CD8-positive, alpha-beta T cell (primary cell): ENCODE measurements at regions of chr15 and their contacts with region 1.

Region 1: GRCh38 chr15:91706322-91707032 is 147.0 kb upstream of the SLCO3A1 start:
- DNase-seq: peak; percentile 58 to 91 (median 80)
- ATAC-seq: peak; percentile 98
- H3K4me3 ChIP-seq: no peak overlapping the region
- H3K4me3 Mint-ChIP-seq: peak overlapping the region; percentile 49
- H3K27ac ChIP-seq: peak overlapping the region in 1 of 2 experiments; percentile 51
- H3K27ac Mint-ChIP-seq: peak overlapping the region; percentile 56
- H3K4me1 ChIP-seq: peaks cover 13% of the 10 kb centered on the region
- H3K4me1 Mint-ChIP-seq: peaks cover 15% of the 10 kb centered on the region
- H3K27me3 ChIP-seq: no peaks in the 10 kb centered on the region
- H3K27me3 Mint-ChIP-seq: no peaks in the 10 kb centered on the region
- CTCF ChIP-seq: peak; percentile 70

Region 2: GRCh38 chr15:91302588-91303439 is 403.7 kb before region 1 on chr15:
- CTCF ChIA-PET with region 1: interaction called, 18 read pairs
- POLR2A ChIA-PET with region 1: no interaction called
- intact Hi-C with region 1: loop called (anchors 1 to 10 kb)
- DNase-seq: peak in 4 of 9 experiments; percentile 33 to 74 (median 60)
- ATAC-seq: peak; percentile 48
- H3K4me3 ChIP-seq: no peak overlapping the region
- H3K4me3 Mint-ChIP-seq: no peak overlapping the region
- H3K27ac ChIP-seq: no peak overlapping the region
- H3K27ac Mint-ChIP-seq: no peak overlapping the region
- H3K4me1 ChIP-seq: peaks cover 26% of the 10 kb centered on the region
- H3K4me1 Mint-ChIP-seq: peaks cover 27% of the 10 kb centered on the region
- H3K27me3 ChIP-seq: peaks cover 0 to 2% of the 10 kb centered on the region in 2 experiments
- H3K27me3 Mint-ChIP-seq: peaks cover 11% of the 10 kb centered on the region
- CTCF ChIP-seq: peak; percentile 87

Region 3: GRCh38 chr15:91717811-91718210 is 11.3 kb after region 1 on chr15:
- CTCF ChIA-PET with region 1: interaction called, 11 read pairs
- POLR2A ChIA-PET with region 1: no interaction called
- intact Hi-C with region 1: no loop called
- DNase-seq: no peak
- ATAC-seq: no peak
- H3K4me3 ChIP-seq: no peak overlapping the region
- H3K4me3 Mint-ChIP-seq: no peak overlapping the region
- H3K27ac ChIP-seq: no peak overlapping the region
- H3K27ac Mint-ChIP-seq: no peak overlapping the region
- H3K4me1 ChIP-seq: no peaks in the 10 kb centered on the region
- H3K4me1 Mint-ChIP-seq: no peaks in the 10 kb centered on the region
- H3K27me3 ChIP-seq: no peaks in the 10 kb centered on the region
- H3K27me3 Mint-ChIP-seq: peaks cover 16% of the 10 kb centered on the region
- CTCF ChIP-seq: no peak

Region 4: DNA sequence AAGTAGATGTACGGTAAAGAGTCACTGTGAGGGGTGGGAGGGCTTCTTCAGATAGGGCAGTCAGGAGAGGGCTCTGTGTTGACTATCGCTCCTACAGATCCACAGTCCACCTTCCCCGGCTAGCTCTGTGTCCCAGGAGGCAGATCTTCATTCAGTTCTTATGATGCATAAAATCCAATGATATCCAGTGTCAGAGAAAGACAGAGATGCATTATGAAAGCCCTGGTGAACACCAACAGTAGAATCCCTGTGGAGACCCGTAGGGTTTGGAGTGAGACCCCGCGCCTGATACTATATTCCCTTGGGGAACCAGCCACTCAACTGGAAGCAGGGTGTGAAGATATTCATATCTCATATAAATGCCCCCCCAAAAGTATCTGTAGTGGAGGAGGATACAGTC is 27.2 kb after region 1 on chr15:
- CTCF ChIA-PET with region 1: interaction called, 10 read pairs
- POLR2A ChIA-PET with region 1: interaction called, 3 read pairs
- intact Hi-C with region 1: no loop called
- DNase-seq: no peak
- ATAC-seq: no peak
- H3K4me3 ChIP-seq: no peak overlapping the region
- H3K4me3 Mint-ChIP-seq: no peak overlapping the region
- H3K27ac ChIP-seq: no peak overlapping the region
- H3K27ac Mint-ChIP-seq: no peak overlapping the region
- H3K4me1 ChIP-seq: no peaks in the 10 kb centered on the region
- H3K4me1 Mint-ChIP-seq: no peaks in the 10 kb centered on the region
- H3K27me3 ChIP-seq: peaks cover 0 to 3% of the 10 kb centered on the region in 2 experiments
- H3K27me3 Mint-ChIP-seq: peaks cover 48% of the 10 kb centered on the region
- CTCF ChIP-seq: no peak

Region 5: GRCh38 chr15:91942676-91943576 is 236.4 kb after region 1 on chr15:
- CTCF ChIA-PET with region 1: interaction called, 36 read pairs
- POLR2A ChIA-PET with region 1: interaction called, 4 read pairs
- intact Hi-C with region 1: loop called (anchors 2 to 5 kb)
- DNase-seq: peak in 6 of 9 experiments; percentile 11 to 72 (median 37)
- ATAC-seq: peak; percentile 71
- H3K4me3 ChIP-seq: no peak overlapping the region
- H3K4me3 Mint-ChIP-seq: peak overlapping the region; percentile 1
- H3K27ac ChIP-seq: no peak overlapping the region
- H3K27ac Mint-ChIP-seq: peak overlapping the region; percentile 43
- H3K4me1 ChIP-seq: no peaks in the 10 kb centered on the region
- H3K4me1 Mint-ChIP-seq: peaks cover 32% of the 10 kb centered on the region
- H3K27me3 ChIP-seq: no peaks in the 10 kb centered on the region
- H3K27me3 Mint-ChIP-seq: no peaks in the 10 kb centered on the region
- CTCF ChIP-seq: no peak

Region 6: DNA sequence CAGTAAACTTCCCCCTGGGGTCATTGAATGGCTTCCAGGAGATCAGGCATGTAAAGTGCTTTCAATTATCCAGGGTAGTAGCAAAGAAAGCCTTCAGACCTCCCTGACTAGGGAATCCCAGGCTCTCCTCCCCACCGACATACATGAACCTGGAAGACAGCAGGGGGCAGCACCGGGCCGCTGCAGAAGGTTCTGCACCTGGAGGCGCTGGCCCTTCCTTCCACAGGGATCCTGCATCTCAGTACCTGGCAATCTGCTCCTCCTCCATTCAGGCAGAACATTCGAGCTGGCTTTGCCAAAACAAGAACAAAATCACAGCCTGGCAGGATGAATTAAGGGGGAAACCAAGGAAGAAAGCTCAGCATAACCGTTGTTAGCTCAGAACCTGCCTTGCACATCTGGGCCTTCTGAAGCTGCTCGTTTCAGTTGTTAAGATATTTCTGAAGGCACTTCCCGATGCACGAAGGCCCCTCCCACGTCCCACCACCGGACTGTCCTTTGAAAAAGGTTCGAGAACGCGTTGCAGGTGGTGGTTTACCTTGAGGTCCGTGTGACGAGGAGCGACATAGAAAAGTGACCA is 384.8 kb after region 1 on chr15:
- CTCF ChIA-PET with region 1: interaction called, 12 read pairs
- POLR2A ChIA-PET with region 1: no interaction called
- intact Hi-C with region 1: no loop called
- DNase-seq: peak in 1 of 9 experiments; percentile 22
- ATAC-seq: no peak
- H3K4me3 ChIP-seq: no peak overlapping the region
- H3K4me3 Mint-ChIP-seq: no peak overlapping the region
- H3K27ac ChIP-seq: no peak overlapping the region
- H3K27ac Mint-ChIP-seq: no peak overlapping the region
- H3K4me1 ChIP-seq: peaks cover 18% of the 10 kb centered on the region
- H3K4me1 Mint-ChIP-seq: peaks cover 16% of the 10 kb centered on the region
- H3K27me3 ChIP-seq: no peaks in the 10 kb centered on the region
- H3K27me3 Mint-ChIP-seq: no peaks in the 10 kb centered on the region
- CTCF ChIP-seq: no peak